ENCODE measurements at regions of chr7 and their contacts with region 1.

Region 1: DNA sequence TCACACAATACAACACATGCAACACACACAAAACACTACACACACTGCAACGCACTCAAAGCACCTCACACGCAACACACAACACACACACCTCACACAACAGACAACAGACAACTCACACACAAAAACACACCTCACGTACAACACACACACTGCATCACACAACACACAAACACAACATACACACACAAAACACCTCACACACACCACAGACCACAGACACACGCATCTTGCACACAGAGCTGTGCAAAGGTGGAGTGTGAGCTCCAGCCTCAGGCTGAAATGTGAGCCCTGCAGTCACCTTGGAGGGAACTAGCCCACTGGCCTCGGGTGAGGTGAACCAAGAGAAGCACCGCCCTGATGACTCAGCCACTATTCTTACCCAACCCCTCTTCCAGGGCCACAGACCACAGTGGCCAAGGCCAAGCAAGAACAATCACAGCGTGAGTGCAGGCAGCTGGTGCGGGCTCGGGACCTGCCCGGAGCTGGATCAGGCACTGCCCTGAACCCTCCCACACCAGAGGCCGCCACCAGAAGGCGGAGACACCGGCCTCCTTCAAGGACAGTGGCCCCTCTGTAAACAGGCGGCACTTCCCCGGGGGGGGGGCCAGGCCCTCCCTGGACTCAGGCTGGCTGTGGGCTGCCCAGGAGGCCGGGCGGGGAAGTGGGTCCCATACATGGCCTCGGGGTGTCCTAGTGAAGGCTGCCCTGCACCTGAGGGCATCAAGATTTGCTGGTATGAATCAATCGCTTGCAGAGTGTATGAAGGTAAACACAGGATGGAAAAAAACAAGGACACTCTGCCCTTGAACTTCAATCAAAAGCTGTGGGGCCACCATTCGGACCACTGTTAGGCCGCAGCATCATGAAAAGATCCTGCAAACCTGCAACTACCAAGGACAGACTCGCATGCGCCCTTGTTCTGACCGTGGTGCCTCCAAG is 106.7 kb downstream of the TNS3 start:
- DNase-seq: peak; percentile 98
- ATAC-seq: peak; percentile 85
- H3K4me3 ChIP-seq: peak overlapping the region in 1 of 3 experiments; percentile 44; a peak in 2 of 6 replicates
- H3K27ac ChIP-seq: peak overlapping the region; percentile 82
- H3K4me1 ChIP-seq: peaks cover 97% of the 10 kb centered on the region
- H3K27me3 ChIP-seq: no peaks in the 10 kb centered on the region
- CTCF ChIP-seq: peak; percentile 55
- EP300 ChIP-seq: peak; percentile 67 to 87
- POLR2A ChIP-seq: peak in 1 of 2 experiments; percentile 88; a peak in 2 of 4 replicates
- RAD21 ChIP-seq: peak; percentile 75

Region 2: DNA sequence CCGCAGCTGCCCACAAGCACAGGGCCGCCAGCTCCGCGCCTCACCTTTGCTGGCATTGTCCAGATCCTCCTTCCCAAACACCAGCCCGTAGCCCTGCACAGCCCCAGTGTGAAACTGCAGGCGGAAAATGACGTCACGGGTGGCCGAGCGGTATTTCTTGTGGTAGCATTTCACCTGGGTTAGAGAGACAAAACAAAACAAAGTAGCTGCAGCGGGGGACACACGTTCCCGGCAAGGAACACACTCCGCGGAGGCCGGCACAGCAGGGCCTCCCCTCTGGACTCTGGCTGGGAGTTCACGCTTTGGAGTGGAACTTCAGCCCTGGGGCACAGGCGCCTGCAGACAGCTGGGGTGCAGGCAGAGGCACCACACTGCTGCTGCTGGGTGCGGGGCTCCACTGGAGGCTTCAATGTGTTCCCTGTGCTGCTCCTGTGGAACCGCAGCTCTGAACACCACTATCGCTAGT is 74.4 kb before region 1 on chr7:
- CTCF ChIA-PET with region 1: no interaction called
- POLR2A ChIA-PET with region 1: no interaction called
- in situ Hi-C with region 1: no loop called
- intact Hi-C with region 1: no loop called
- DNase-seq: no peak
- ATAC-seq: peak; percentile 12; the same call in 1 of the 3 replicates
- H3K4me3 ChIP-seq: no peak overlapping the region
- H3K27ac ChIP-seq: no peak overlapping the region
- H3K4me1 ChIP-seq: peaks cover 7% of the 10 kb centered on the region
- H3K27me3 ChIP-seq: no peaks in the 10 kb centered on the region
- CTCF ChIP-seq: no peak
- EP300 ChIP-seq: no peak
- POLR2A ChIP-seq: no peak
- RAD21 ChIP-seq: no peak

Region 3: GRCh38 chr7:47444379-47445057 is 30.7 kb before region 1 on chr7:
- CTCF ChIA-PET with region 1: no interaction called
- POLR2A ChIA-PET with region 1: interaction called, 5 read pairs
- in situ Hi-C with region 1: no loop called
- intact Hi-C with region 1: loop called (anchors 1 kb)
- DNase-seq: peak; percentile 49
- ATAC-seq: peak; percentile 46
- H3K4me3 ChIP-seq: no peak overlapping the region
- H3K27ac ChIP-seq: no peak overlapping the region
- H3K4me1 ChIP-seq: peaks cover 60% of the 10 kb centered on the region
- H3K27me3 ChIP-seq: no peaks in the 10 kb centered on the region
- CTCF ChIP-seq: peak; percentile 56
- EP300 ChIP-seq: 0 out of 4 replicates have a peak, but pooled peaks of 1 of the 2 experiments have one; percentile 12
- POLR2A ChIP-seq: no peak
- RAD21 ChIP-seq: peak; percentile 56; the same call in 1 of the 2 replicates

Region 4: GRCh38 chr7:47497367-47498096 is 22.3 kb after region 1 on chr7:
- CTCF ChIA-PET with region 1: no interaction called
- POLR2A ChIA-PET with region 1: interaction called, 46 read pairs
- in situ Hi-C with region 1: no loop called
- intact Hi-C with region 1: loop called (anchors 1 kb)
- DNase-seq: no peak
- ATAC-seq: no peak
- H3K4me3 ChIP-seq: no peak overlapping the region
- H3K27ac ChIP-seq: no peak overlapping the region
- H3K4me1 ChIP-seq: peaks cover 82% of the 10 kb centered on the region
- H3K27me3 ChIP-seq: no peaks in the 10 kb centered on the region
- CTCF ChIP-seq: no peak
- EP300 ChIP-seq: no peak
- POLR2A ChIP-seq: no peak
- RAD21 ChIP-seq: no peak

Region 5: DNA sequence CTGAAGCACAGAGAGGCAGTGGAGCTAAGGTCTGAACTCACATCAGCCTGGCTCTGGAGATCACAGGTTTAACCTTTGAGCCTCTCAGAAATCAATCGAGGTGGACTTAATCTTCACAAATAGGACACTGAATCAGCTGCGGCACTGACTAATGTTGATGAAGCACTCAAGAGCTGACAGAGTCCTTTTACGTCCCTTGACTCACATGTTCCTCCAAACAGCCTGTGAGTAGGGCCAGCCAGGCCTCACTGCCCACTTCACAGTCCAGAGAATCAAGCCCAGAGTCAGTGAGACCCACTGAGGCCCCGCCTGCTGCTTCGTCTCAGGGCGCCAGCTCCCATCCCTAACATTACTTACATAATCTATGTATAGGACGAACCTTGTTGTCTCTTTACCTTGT is 43.6 kb after region 1 on chr7:
- CTCF ChIA-PET with region 1: no interaction called
- POLR2A ChIA-PET with region 1: interaction called, 10 read pairs
- in situ Hi-C with region 1: no loop called
- intact Hi-C with region 1: loop called (anchors 5 kb)
- DNase-seq: peak; percentile 85
- ATAC-seq: peak; percentile 90
- H3K4me3 ChIP-seq: no peak overlapping the region
- H3K27ac ChIP-seq: peak overlapping the region; percentile 51
- H3K4me1 ChIP-seq: peaks cover 79% of the 10 kb centered on the region
- H3K27me3 ChIP-seq: no peaks in the 10 kb centered on the region
- CTCF ChIP-seq: 0 out of 2 replicates have a peak, but pooled peaks have one; percentile 14
- EP300 ChIP-seq: peak in 1 of 2 experiments; percentile 58; a peak in 1 of 4 replicates
- POLR2A ChIP-seq: no peak
- RAD21 ChIP-seq: peak; percentile 37; the same call in 1 of the 2 replicates

Region 6: GRCh38 chr7:47571331-47572093 is 96.3 kb after region 1 on chr7:
- CTCF ChIA-PET with region 1: no interaction called
- POLR2A ChIA-PET with region 1: interaction called, 10 read pairs
- in situ Hi-C with region 1: loop called (anchors 5 kb)
- intact Hi-C with region 1: loop called (anchors 1 kb)
- DNase-seq: peak; percentile 90
- ATAC-seq: peak; percentile 70
- H3K4me3 ChIP-seq: peak overlapping the region; percentile 5 to 65 (median 43); a peak in 4 of 6 replicates
- H3K27ac ChIP-seq: peak overlapping the region; percentile 80
- H3K4me1 ChIP-seq: peaks cover 81% of the 10 kb centered on the region
- H3K27me3 ChIP-seq: no peaks in the 10 kb centered on the region
- CTCF ChIP-seq: 0 out of 2 replicates have a peak, but pooled peaks have one; percentile 3
- EP300 ChIP-seq: peak in 1 of 2 experiments; percentile 50; a peak in 2 of 4 replicates
- POLR2A ChIP-seq: peak; percentile 43 to 45
- RAD21 ChIP-seq: peak; percentile 30; the same call in 1 of the 2 replicates

Region 7: GRCh38 chr7:47786557-47787248 is 311.5 kb after region 1 on chr7:
- CTCF ChIA-PET with region 1: no interaction called
- POLR2A ChIA-PET with region 1: interaction called, 7 read pairs
- in situ Hi-C with region 1: no loop called
- intact Hi-C with region 1: loop called (anchors 10 kb)
- DNase-seq: peak; percentile 97
- ATAC-seq: peak; percentile 95
- H3K4me3 ChIP-seq: peak overlapping the region in 2 of 3 experiments; percentile 27 to 28; a peak in 4 of 6 replicates
- H3K27ac ChIP-seq: peak overlapping the region; percentile 92
- H3K4me1 ChIP-seq: peaks cover 68% of the 10 kb centered on the region
- H3K27me3 ChIP-seq: no peaks in the 10 kb centered on the region
- CTCF ChIP-seq: no peak
- EP300 ChIP-seq: peak; percentile 16 to 87; a peak in 3 of 4 replicates
- POLR2A ChIP-seq: peak in 1 of 2 experiments; percentile 49; a peak in 2 of 4 replicates
- RAD21 ChIP-seq: peak; percentile 43; the same call in 1 of the 2 replicates